ENCODE measurements at regions of chr7 and their contacts with region 1.

Region 1: DNA sequence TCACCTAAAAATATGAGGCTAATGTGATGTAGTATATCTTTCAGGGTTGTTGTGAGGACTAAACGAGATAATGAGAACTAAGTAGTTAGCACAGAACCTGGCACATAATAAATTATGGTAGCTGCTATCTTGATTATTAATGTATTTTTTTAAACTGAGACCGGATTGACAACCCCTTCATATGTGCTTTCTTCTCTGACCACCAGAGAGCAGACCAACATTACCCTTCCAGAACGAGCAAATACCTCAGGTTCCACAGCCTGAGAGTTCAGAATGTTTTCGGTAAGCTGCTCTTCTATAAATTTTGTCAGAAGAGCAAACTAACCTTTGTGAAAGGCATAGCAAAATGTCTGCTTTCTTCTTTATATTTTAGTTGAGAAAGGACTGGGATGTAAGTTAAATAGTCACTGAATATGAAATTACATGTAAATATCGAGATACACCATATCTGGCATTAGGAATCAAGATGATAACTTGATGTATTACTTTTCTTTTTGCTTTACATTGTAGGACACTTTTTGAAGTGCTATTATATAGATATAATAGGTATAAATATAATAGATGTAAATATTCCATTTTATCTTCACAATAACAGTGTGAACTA is 13.6 kb upstream of the BPGM start:
- DNase-seq: peak; percentile 67 to 73
- ATAC-seq: peak; percentile 78 to 94; a peak in 5 of 6 replicates
- H3K4me3 ChIP-seq: no peak overlapping the region
- H3K27ac ChIP-seq: no peak overlapping the region
- H3K4me1 ChIP-seq: no peaks in the 10 kb centered on the region
- CTCF ChIP-seq: peak; percentile 89
- EP300 ChIP-seq: no peak
- POLR2A ChIP-seq: no peak
- RAD21 ChIP-seq: peak; percentile 89 to 95

Region 2: GRCh38 chr7:134613623-134614347 is 19.3 kb before region 1 on chr7:
- CTCF ChIA-PET with region 1: interaction called, 63 read pairs
- POLR2A ChIA-PET with region 1: no interaction called
- DNase-seq: peak; percentile 57 to 86
- ATAC-seq: peak; percentile 90 to 94
- H3K4me3 ChIP-seq: no peak overlapping the region
- H3K27ac ChIP-seq: peak overlapping the region; percentile 72 to 80
- H3K4me1 ChIP-seq: peaks cover 25% of the 10 kb centered on the region
- CTCF ChIP-seq: no peak
- EP300 ChIP-seq: peak; percentile 50 to 73; a peak in 3 of 5 replicates
- POLR2A ChIP-seq: no peak
- RAD21 ChIP-seq: peak; percentile 7 to 46; a peak in 3 of 5 replicates

Region 3: DNA sequence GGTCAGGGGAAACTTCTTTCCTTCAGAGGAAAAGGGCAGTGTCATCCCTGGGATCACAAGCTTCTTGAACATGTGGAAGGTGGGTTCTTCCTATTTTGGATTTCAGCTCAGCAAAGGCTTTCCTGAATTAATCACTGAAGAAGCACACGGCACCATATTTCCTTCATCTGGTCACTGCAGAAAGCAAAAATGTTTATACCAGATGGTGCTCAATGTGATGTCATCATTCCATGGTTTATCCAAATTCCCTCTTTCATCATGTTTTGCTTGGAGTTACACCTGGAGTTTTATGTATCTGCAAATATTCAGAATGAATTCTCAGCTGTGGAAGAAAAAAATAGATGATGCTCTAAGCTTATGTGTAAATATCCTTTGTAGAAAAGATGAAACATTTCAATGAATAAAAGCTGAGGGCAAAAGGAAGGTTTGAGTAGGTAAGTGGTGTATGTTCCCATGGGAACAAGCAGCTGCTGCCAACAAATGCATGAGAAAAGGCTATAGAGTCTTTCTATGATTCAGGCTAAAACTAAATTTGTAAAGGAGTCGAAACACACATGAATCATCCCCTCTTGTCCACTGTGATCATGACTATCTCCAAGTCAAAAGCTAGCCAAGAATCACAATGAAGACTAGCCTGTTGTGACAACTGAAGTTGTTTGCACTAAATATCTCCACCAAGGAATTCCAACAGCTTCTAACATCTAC is 13.3 kb before region 1 on chr7:
- CTCF ChIA-PET with region 1: interaction called, 63 read pairs
- POLR2A ChIA-PET with region 1: no interaction called
- DNase-seq: peak in 1 of 2 experiments; percentile 66
- ATAC-seq: peak; percentile 83 to 86
- H3K4me3 ChIP-seq: no peak overlapping the region
- H3K27ac ChIP-seq: peak overlapping the region; percentile 44 to 54; a peak in 5 of 6 replicates
- H3K4me1 ChIP-seq: peaks cover 25% of the 10 kb centered on the region
- CTCF ChIP-seq: no peak
- EP300 ChIP-seq: no peak
- POLR2A ChIP-seq: no peak
- RAD21 ChIP-seq: no peak

Region 4: GRCh38 chr7:134646425-134647305 is 13.6 kb after region 1 on chr7 and contains the start of gene BPGM:
- CTCF ChIA-PET with region 1: interaction called, 80 read pairs
- POLR2A ChIA-PET with region 1: interaction called, 9 read pairs
- DNase-seq: peak; percentile 100
- ATAC-seq: peak; percentile 99 to 100
- H3K4me3 ChIP-seq: peak within 1 kb of the TSS; percentile 76
- H3K27ac ChIP-seq: peak within 1 kb of the TSS; percentile 83 to 84
- H3K4me1 ChIP-seq: peaks cover 9% of the 10 kb centered on the region; the same call in 2 of the 3 replicates
- CTCF ChIP-seq: peak; percentile 61
- EP300 ChIP-seq: no peak
- POLR2A ChIP-seq: peak; percentile 94
- RAD21 ChIP-seq: no peak
- polyA plus RNA-seq, gene BPGM: 21.2 and 28.3 TPM in 2 replicates

Region 5: GRCh38 chr7:134676743-134677142 is 43.7 kb after region 1 on chr7:
- CTCF ChIA-PET with region 1: interaction called, 12 read pairs
- POLR2A ChIA-PET with region 1: no interaction called
- DNase-seq: no peak
- ATAC-seq: no peak
- H3K4me3 ChIP-seq: no peak overlapping the region
- H3K27ac ChIP-seq: no peak overlapping the region
- H3K4me1 ChIP-seq: no peaks in the 10 kb centered on the region
- CTCF ChIP-seq: no peak
- EP300 ChIP-seq: no peak
- POLR2A ChIP-seq: no peak
- RAD21 ChIP-seq: no peak

Region 6: DNA sequence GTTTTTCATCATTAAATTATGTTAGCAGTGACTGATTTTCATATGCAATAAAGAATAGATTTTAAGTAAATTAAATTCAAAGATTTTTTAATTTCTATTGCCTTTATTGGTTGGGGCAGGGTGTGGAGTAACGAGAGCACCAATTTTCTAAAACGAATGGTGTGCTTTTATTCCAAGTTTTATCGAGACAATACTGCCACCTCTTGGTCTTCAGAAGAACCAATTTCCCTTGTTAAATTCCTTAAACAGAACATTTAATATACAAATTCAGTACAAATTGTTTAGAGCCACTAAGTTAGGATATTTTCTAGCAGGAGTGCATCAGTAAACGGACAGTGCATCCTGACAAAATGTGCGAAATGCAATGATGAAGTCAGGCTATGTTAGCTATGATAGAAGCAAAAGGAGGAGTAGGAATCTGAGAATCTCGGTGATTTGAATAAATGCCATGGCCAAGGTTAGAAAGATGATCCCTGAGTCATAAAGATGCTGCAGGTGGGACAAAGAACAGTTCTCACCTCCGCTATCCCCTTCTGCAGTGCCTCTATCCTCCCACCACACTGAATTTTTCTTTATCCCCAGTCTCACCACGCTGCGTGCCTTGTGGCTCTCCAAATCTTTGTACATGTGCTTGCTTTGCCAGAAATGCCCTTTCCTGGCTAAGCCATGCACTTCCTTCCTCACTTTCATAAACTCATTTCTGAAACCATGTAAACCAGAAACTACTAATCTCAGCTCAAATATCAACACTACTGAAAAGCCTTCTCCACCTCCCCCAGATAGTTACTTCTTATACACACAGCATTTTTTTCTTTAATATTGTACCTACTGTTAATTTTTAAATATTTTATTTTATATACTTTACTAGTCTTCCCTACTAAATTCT is 321.4 kb after region 1 on chr7:
- CTCF ChIA-PET with region 1: interaction called, 12 read pairs
- POLR2A ChIA-PET with region 1: no interaction called
- DNase-seq: peak; percentile 22 to 51
- ATAC-seq: peak in 1 of 2 experiments; percentile 66; a peak in 2 of 6 replicates
- H3K4me3 ChIP-seq: no peak overlapping the region
- H3K27ac ChIP-seq: no peak overlapping the region; a peak in 1 of 6 replicates
- H3K4me1 ChIP-seq: no peaks in the 10 kb centered on the region
- CTCF ChIP-seq: peak; percentile 86
- EP300 ChIP-seq: no peak
- POLR2A ChIP-seq: no peak
- RAD21 ChIP-seq: peak; percentile 83 to 87

Measured in A549 (cell line).